PC-9 (cell line): ENCODE measurements at regions of chr7 and their contacts with region 1.

Region 1: DNA sequence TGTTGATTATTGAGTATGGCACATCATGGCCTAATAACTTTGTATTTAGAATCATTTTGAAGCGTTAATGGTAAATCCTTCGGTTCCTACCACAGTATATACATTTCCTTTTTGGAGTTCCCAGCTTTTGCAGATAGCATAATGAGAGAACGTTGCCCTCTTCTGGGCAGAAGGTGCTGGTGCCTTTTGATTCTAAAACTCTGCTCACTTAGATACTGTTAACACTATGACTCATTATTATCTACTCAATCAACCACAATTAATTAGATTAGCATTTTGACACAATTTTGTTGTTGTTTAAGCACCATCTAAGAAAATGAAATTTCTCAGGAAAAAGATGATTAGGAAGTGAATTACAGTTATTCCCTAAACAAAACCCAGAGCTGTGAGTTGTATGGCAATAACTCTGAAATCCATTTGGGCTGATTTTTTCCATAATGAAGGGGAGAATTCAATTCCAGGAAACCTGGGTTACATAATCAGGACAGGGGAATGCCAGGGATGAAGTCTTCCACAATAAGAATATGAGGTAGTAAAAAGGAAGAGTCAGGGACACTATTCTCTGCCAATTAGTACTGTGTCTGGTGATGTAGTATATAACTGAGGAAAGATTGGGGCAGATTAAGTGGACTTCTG is 11.5 kb upstream of the DLD start:
- DNase-seq: peak; percentile 39 to 79
- H3K4me3 ChIP-seq: no peak overlapping the region
- H3K27ac ChIP-seq: no peak overlapping the region
- H3K4me1 ChIP-seq: peaks cover 13% of the 10 kb centered on the region; the same call in 1 of the 2 replicates
- H3K27me3 ChIP-seq: no peaks in the 10 kb centered on the region
- CTCF ChIP-seq: peak; percentile 82

Region 2: DNA sequence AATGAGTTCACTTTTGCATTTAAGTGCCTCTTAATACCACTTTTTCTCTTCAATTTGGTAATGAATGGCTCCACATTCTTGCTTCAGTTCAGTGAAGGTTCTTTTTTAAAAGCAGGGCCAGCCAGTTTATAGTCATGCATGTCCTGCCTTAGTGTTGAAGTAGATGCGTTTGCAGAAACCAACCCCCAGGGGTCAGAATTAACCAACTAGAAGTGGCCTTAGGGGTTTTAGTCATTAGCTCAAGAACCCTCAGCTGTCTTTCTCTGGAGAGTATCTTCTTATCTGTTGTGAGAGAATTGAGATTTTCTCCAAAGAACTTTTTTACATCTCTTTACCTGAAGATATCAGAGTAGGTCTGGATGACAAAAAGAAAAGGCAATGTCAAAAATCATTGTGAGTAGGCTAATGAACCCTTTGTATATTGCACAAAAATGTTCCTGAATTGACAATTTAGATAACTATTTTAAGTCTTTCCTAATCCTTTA is 932.2 kb before region 1 on chr7:
- CTCF ChIA-PET with region 1: no interaction called
- POLR2A ChIA-PET with region 1: no interaction called
- intact Hi-C with region 1: loop called (anchors 5 kb)
- DNase-seq: peak; percentile 50 to 60
- H3K4me3 ChIP-seq: no peak overlapping the region
- H3K27ac ChIP-seq: no peak overlapping the region
- H3K4me1 ChIP-seq: no peaks in the 10 kb centered on the region
- H3K27me3 ChIP-seq: no peaks in the 10 kb centered on the region; the same call in 1 of the 2 replicates
- CTCF ChIP-seq: peak; percentile 75

Region 3: DNA sequence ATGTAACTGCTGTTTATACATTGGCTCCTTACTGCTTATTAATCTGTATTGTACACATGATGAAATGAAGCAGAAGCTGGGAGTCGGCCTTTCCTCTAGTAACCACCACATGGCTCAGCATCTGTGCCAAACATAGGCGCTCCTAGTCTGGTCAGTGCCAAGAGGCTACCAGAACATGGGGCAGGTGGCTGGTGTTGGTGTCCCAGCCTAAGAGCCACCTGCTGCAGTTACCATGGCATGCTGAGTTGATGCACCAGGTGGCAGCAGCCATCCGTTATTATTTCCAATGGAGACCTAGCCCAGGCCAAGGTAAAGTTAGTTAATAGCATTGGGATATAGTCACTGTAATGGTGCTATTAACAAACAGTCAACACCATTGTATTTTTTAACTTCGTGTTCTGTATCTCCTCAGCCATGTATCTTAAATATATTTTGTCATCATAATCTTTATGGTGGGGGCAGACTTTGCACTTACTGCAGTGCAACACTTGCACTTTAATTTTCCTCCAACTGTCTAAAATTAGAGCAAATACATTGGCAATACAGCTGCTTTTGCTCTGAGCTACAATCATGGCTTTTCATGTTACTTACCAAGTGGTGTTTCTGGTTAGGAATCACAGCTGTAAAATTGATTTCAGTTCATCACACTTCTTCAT is 677.6 kb before region 1 on chr7:
- CTCF ChIA-PET with region 1: interaction called, 9 read pairs
- POLR2A ChIA-PET with region 1: no interaction called
- intact Hi-C with region 1: loop called (anchors 2 kb)
- DNase-seq: peak in 1 of 2 experiments; percentile 55
- H3K4me3 ChIP-seq: no peak overlapping the region
- H3K27ac ChIP-seq: no peak overlapping the region
- H3K4me1 ChIP-seq: no peaks in the 10 kb centered on the region
- H3K27me3 ChIP-seq: no peaks in the 10 kb centered on the region
- CTCF ChIP-seq: peak; percentile 67

Region 4: GRCh38 chr7:107563775-107564552 is 315.6 kb before region 1 on chr7 and contains the starts of genes COG5 and DUS4L:
- CTCF ChIA-PET with region 1: interaction called, 6 read pairs
- POLR2A ChIA-PET with region 1: no interaction called
- intact Hi-C with region 1: loop called (anchors 10 kb)
- DNase-seq: peak; percentile 58 to 78
- H3K4me3 ChIP-seq: peak within 1 kb of the TSS; percentile 92
- H3K27ac ChIP-seq: peak within 1 kb of the TSS; percentile 89
- H3K4me1 ChIP-seq: peaks cover 41% of the 10 kb centered on the region
- H3K27me3 ChIP-seq: no peaks in the 10 kb centered on the region
- CTCF ChIP-seq: no peak
- total RNA-seq, gene COG5: 32.3 and 43.5 TPM in 2 replicates
- total RNA-seq, gene DUS4L: 22.0 and 25.2 TPM in 2 replicates

Region 5: GRCh38 chr7:107836237-107837144 is 43.0 kb before region 1 on chr7:
- CTCF ChIA-PET with region 1: no interaction called
- POLR2A ChIA-PET with region 1: no interaction called
- intact Hi-C with region 1: no loop called
- DNase-seq: no peak
- H3K4me3 ChIP-seq: no peak overlapping the region
- H3K27ac ChIP-seq: no peak overlapping the region
- H3K4me1 ChIP-seq: no peaks in the 10 kb centered on the region
- H3K27me3 ChIP-seq: 0 out of 2 replicates have a peak, but pooled peaks cover 4% of the 10 kb centered on the region
- CTCF ChIP-seq: no peak

Region 6: GRCh38 chr7:107890962-107891635 is 11.6 kb after region 1 on chr7 and contains the start of gene DLD:
- CTCF ChIA-PET with region 1: interaction called, 11 read pairs
- POLR2A ChIA-PET with region 1: interaction called, 5 read pairs
- intact Hi-C with region 1: no loop called
- DNase-seq: peak; percentile 79 to 92
- H3K4me3 ChIP-seq: peak within 1 kb of the TSS; percentile 61
- H3K27ac ChIP-seq: peak within 1 kb of the TSS; percentile 93
- H3K4me1 ChIP-seq: peaks cover 29% of the 10 kb centered on the region
- H3K27me3 ChIP-seq: no peaks in the 10 kb centered on the region
- CTCF ChIP-seq: no peak
- total RNA-seq, gene DLD: 109 and 157 TPM in 2 replicates

Region 7: GRCh38 chr7:107939573-107940489 is 60.3 kb after region 1 on chr7:
- CTCF ChIA-PET with region 1: no interaction called
- POLR2A ChIA-PET with region 1: no interaction called
- intact Hi-C with region 1: no loop called
- DNase-seq: no peak
- H3K4me3 ChIP-seq: no peak overlapping the region
- H3K27ac ChIP-seq: no peak overlapping the region
- H3K4me1 ChIP-seq: no peaks in the 10 kb centered on the region
- H3K27me3 ChIP-seq: no peaks in the 10 kb centered on the region
- CTCF ChIP-seq: no peak

Region 8: GRCh38 chr7:108146070-108146837 is 266.7 kb after region 1 on chr7:
- CTCF ChIA-PET with region 1: interaction called, 4 read pairs
- POLR2A ChIA-PET with region 1: no interaction called
- intact Hi-C with region 1: loop called (anchors 2 kb)
- DNase-seq: peak; percentile 70 to 71
- H3K4me3 ChIP-seq: no peak overlapping the region
- H3K27ac ChIP-seq: no peak overlapping the region
- H3K4me1 ChIP-seq: no peaks in the 10 kb centered on the region
- H3K27me3 ChIP-seq: no peaks in the 10 kb centered on the region
- CTCF ChIP-seq: peak; percentile 89